ENCODE measurements at regions of chr10 and their contacts with region 1.

Region 1: GRCh38 chr10:103244663-103245271 is 920 bp upstream of the RPEL1 start:
- DNase-seq: peak; percentile 70
- H3K4me3 Mint-ChIP-seq: no peak overlapping the region
- H3K27ac Mint-ChIP-seq: no peak overlapping the region
- H3K4me1 Mint-ChIP-seq: peaks cover 19% of the 10 kb centered on the region
- H3K27me3 Mint-ChIP-seq: no peaks in the 10 kb centered on the region
- CTCF ChIP-seq: peak; percentile 54

Region 2: GRCh38 chr10:102917962-102918816 is 326.6 kb before region 1 on chr10 and contains the start of gene CNNM2:
- CTCF ChIA-PET with region 1: interaction called, 15 read pairs
- intact Hi-C with region 1: loop called (anchors 1 kb)
- DNase-seq: peak; percentile 97
- H3K4me3 Mint-ChIP-seq: peak within 1 kb of the TSS; percentile 98
- H3K27ac Mint-ChIP-seq: peak within 1 kb of the TSS; percentile 70
- H3K4me1 Mint-ChIP-seq: peaks cover 26% of the 10 kb centered on the region
- H3K27me3 Mint-ChIP-seq: no peaks in the 10 kb centered on the region
- CTCF ChIP-seq: no peak
- total RNA-seq, gene CNNM2: 3.2 and 4.2 TPM in 2 replicates

Region 3: DNA sequence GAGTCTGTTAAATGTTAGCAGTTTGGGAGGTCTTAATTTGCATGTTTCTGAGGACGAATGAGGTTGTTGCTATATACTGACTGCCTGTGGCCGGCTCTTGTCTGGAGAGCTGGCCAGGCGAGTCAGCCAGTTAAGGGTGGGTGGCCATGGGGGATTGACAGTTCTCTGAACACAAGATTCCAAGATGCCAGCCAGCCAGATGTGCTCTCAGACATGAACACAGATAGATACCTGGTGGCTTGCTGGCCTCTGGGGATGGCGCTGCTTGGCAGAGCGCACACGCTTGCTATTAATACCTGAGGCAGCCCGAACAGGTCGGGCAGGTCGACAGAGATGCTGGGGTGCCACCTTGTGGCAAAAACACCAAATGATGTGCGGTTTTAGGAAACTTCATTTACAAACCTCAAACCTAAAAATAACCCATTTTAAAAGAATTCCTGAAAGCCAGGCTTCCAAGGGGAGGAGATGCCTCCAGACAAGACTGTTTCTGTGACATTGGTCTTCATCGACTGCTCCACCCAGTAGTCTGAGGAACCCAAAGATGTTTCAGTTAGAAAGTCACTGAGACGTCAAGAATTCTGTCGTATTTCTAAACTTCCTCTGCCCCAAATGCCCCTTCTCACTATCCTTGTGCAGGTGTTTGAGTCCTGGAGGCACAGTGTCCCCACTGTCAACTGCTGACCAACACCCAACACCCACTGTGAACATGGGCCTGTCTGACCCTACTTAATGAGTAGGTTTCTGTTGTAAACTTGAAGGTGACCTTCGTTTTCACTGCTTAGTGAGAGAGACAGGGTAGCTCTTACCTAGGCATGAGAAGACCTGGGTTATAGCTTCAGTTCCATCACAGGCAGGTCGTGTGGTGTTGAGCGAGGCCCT is 175.1 kb before region 1 on chr10:
- CTCF ChIA-PET with region 1: no interaction called
- intact Hi-C with region 1: loop called (anchors 5 kb)
- DNase-seq: peak; percentile 69
- H3K4me3 Mint-ChIP-seq: no peak overlapping the region
- H3K27ac Mint-ChIP-seq: no peak overlapping the region
- H3K4me1 Mint-ChIP-seq: no peaks in the 10 kb centered on the region
- H3K27me3 Mint-ChIP-seq: peaks cover 21% of the 10 kb centered on the region
- CTCF ChIP-seq: peak; percentile 71

Region 4: GRCh38 chr10:103111031-103111917 is 133.5 kb before region 1 on chr10:
- CTCF ChIA-PET with region 1: interaction called, 3 read pairs
- intact Hi-C with region 1: loop called (anchors 10 kb)
- DNase-seq: no peak
- H3K4me3 Mint-ChIP-seq: no peak overlapping the region
- H3K27ac Mint-ChIP-seq: no peak overlapping the region
- H3K4me1 Mint-ChIP-seq: no peaks in the 10 kb centered on the region
- H3K27me3 Mint-ChIP-seq: no peaks in the 10 kb centered on the region
- CTCF ChIP-seq: no peak

Region 5: DNA sequence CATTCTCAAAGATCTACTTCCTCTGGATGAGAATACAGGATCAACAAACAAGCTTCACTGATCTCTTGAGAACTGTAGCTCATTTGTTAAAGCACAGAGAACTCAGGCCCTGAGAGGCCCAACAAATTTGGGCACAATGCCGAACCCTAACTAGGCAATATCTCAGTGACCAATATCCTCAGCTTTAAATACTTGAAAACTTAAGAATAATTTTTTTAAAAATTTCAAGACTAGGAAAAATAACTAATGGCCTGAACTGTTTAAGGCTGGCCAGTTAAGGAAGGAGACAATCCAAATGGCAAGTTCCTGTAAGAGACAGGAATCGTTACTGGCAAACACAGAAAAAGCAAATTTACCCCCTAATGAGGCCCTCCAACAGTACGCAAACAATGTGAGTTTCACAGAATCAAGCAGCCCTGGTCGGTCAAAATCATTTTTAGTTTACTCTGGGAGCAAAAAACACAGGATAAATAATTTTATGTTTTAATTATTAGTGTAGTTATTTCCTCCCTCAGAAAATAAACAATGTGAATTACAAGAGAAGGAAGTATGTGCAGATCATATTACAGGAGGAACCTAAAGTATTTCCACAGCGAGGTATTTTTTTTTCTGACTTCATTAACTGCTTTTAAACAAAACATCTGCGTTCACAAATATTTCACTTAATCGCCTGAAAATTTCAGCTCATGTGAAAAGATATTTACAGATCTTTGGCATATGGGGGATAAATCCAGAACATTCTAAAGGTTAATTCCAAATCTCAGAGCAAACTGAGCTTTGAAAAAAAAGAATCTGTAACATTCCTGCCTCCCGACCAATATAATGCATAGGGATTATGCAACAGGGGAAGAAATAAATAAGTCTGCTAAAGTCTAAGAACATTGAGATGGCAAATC is 91.2 kb before region 1 on chr10:
- CTCF ChIA-PET with region 1: interaction called, 13 read pairs
- intact Hi-C with region 1: no loop called
- DNase-seq: no peak
- H3K4me3 Mint-ChIP-seq: peak overlapping the region; percentile 21
- H3K27ac Mint-ChIP-seq: peak overlapping the region; percentile 17
- H3K4me1 Mint-ChIP-seq: peaks cover 19% of the 10 kb centered on the region
- H3K27me3 Mint-ChIP-seq: no peaks in the 10 kb centered on the region
- CTCF ChIP-seq: no peak

Region 6: DNA sequence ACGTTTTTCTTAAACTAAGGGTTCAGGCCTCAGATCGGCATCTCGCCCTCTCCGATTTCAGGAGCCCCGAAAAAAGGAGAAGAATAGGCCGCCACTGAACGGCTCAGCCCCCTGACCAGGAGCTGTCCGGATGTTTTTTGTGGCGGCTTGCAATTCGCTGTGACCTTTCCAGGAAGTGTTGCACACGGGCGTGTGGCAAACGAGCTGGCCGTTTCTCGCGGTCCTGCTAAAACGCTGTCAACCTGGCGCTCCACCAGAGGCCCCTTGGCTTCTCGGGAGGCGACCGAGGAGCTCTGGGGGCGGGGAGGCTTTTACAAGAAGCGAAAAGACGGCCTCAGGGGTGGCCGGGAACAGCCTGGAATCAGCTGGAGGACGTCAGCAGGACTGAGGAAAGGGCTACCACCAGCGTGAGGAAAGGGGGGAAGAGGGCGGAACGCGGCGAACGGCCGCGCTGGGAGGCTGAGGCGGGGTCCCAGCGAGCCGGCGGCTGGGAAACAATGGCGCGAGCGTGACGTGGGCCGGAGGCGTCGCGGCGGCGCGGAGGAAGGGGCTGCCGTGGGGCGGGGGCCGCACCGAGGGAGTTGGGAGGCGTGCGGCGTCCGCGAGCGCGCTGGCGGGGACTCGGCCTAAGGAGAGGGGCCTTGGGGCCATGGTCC is 52.2 kb before region 1 on chr10:
- CTCF ChIA-PET with region 1: interaction called, 8 read pairs
- intact Hi-C with region 1: loop called (anchors 2 kb)
- DNase-seq: peak; percentile 65
- H3K4me3 Mint-ChIP-seq: peak overlapping the region; percentile 82
- H3K27ac Mint-ChIP-seq: peak overlapping the region; percentile 86
- H3K4me1 Mint-ChIP-seq: peaks cover 28% of the 10 kb centered on the region
- H3K27me3 Mint-ChIP-seq: no peaks in the 10 kb centered on the region
- CTCF ChIP-seq: no peak

Measured in Calu3 (cell line).